ENCODE measurements at regions of chr15 and their contacts with region 1.

Region 1: DNA sequence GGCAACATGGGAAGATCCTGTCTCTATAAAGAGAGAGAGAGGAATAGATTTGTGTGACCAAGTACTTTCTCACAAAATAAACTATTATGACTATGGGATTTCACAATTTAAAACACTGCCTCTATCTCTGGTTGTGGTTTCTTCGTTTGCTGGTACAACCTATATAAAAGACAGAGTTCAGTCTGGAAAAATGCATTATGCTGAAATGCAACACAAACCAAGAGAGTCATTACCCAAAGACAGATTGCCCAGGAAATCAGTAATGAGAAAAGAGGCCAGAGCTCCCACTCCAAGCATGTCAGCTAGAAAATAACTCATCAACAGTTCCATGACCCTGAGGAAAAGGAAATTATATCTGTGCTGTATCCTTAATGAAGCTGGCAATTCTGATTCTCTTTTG is 23.2 kb downstream of the GPR176 start:
- DNase-seq: no peak
- ATAC-seq: no peak
- H3K4me3 ChIP-seq: no peak overlapping the region
- H3K4me3 Mint-ChIP-seq: no peak overlapping the region
- H3K27ac ChIP-seq: no peak overlapping the region
- H3K27ac Mint-ChIP-seq: no peak overlapping the region
- H3K4me1 ChIP-seq: no peaks in the 10 kb centered on the region
- H3K4me1 Mint-ChIP-seq: no peaks in the 10 kb centered on the region
- H3K27me3 ChIP-seq: no peaks in the 10 kb centered on the region
- H3K27me3 Mint-ChIP-seq: peaks cover 23% of the 10 kb centered on the region
- CTCF ChIP-seq: no peak

Region 2: GRCh38 chr15:38828031-38828532 is 1068.8 kb before region 1 on chr15:
- CTCF ChIA-PET with region 1: no interaction called
- POLR2A ChIA-PET with region 1: no interaction called
- intact Hi-C with region 1: no loop called
- DNase-seq: no peak
- ATAC-seq: no peak
- H3K4me3 ChIP-seq: no peak overlapping the region
- H3K4me3 Mint-ChIP-seq: no peak overlapping the region
- H3K27ac ChIP-seq: no peak overlapping the region
- H3K27ac Mint-ChIP-seq: no peak overlapping the region
- H3K4me1 ChIP-seq: no peaks in the 10 kb centered on the region
- H3K4me1 Mint-ChIP-seq: no peaks in the 10 kb centered on the region
- H3K27me3 ChIP-seq: peaks cover 0 to 11% of the 10 kb centered on the region in 2 experiments
- H3K27me3 Mint-ChIP-seq: peaks cover 50% of the 10 kb centered on the region
- CTCF ChIP-seq: no peak

Region 3: GRCh38 chr15:39801641-39802309 is 95.1 kb before region 1 on chr15:
- CTCF ChIA-PET with region 1: no interaction called
- POLR2A ChIA-PET with region 1: no interaction called
- intact Hi-C with region 1: no loop called
- DNase-seq: peak in 2 of 14 experiments; percentile 23 to 35
- ATAC-seq: peak; percentile 41
- H3K4me3 ChIP-seq: no peak overlapping the region
- H3K4me3 Mint-ChIP-seq: no peak overlapping the region
- H3K27ac ChIP-seq: no peak overlapping the region
- H3K27ac Mint-ChIP-seq: no peak overlapping the region
- H3K4me1 ChIP-seq: no peaks in the 10 kb centered on the region
- H3K4me1 Mint-ChIP-seq: no peaks in the 10 kb centered on the region
- H3K27me3 ChIP-seq: peaks cover 14 to 31% of the 10 kb centered on the region in 2 experiments
- H3K27me3 Mint-ChIP-seq: peaks cover 49% of the 10 kb centered on the region
- CTCF ChIP-seq: peak; percentile 20

Region 4: DNA sequence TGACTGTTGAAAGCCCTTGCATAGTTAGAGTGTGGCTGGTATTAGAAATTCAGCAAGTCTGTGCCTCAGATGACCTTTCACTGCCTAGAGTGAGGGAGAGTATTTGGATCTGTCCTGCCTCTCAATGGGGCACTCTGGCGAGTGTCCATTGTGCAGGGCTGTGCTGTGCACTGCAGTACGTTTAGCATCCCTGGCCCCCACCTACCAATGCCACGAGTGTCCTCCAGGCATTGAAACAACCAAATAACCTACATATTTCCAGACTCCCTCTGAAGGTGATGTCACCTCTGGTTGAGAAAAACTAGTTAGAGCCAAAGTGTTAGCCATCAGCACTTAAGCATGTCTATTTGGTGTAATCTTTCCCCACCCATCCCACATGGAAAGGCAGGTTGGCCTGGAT is 43.1 kb after region 1 on chr15:
- CTCF ChIA-PET with region 1: no interaction called
- POLR2A ChIA-PET with region 1: no interaction called
- intact Hi-C with region 1: loop called in 1 of 2 experiments (anchors 1 kb)
- DNase-seq: no peak
- ATAC-seq: no peak
- H3K4me3 ChIP-seq: no peak overlapping the region
- H3K4me3 Mint-ChIP-seq: no peak overlapping the region
- H3K27ac ChIP-seq: no peak overlapping the region
- H3K27ac Mint-ChIP-seq: no peak overlapping the region
- H3K4me1 ChIP-seq: peaks cover 9% of the 10 kb centered on the region
- H3K4me1 Mint-ChIP-seq: peaks cover 16% of the 10 kb centered on the region
- H3K27me3 ChIP-seq: no peaks in the 10 kb centered on the region
- H3K27me3 Mint-ChIP-seq: no peaks in the 10 kb centered on the region
- CTCF ChIP-seq: no peak

Region 5: GRCh38 chr15:40038638-40039543 is 142.0 kb after region 1 on chr15 and contains the start of gene SRP14:
- CTCF ChIA-PET with region 1: no interaction called
- POLR2A ChIA-PET with region 1: no interaction called
- intact Hi-C with region 1: no loop called
- DNase-seq: peak; percentile 85 to 96 (median 90)
- ATAC-seq: peak; percentile 92
- H3K4me3 ChIP-seq: peak within 1 kb of the TSS; percentile 95
- H3K4me3 Mint-ChIP-seq: peak within 1 kb of the TSS; percentile 100
- H3K27ac ChIP-seq: peak within 1 kb of the TSS; percentile 88 to 90
- H3K27ac Mint-ChIP-seq: peak within 1 kb of the TSS; percentile 97
- H3K4me1 ChIP-seq: peaks cover 20% of the 10 kb centered on the region
- H3K4me1 Mint-ChIP-seq: peaks cover 49% of the 10 kb centered on the region
- H3K27me3 ChIP-seq: no peaks in the 10 kb centered on the region
- H3K27me3 Mint-ChIP-seq: no peaks in the 10 kb centered on the region
- CTCF ChIP-seq: no peak
- total RNA-seq, gene SRP14: 120 to 126 TPM